H1 (cell line): ENCODE measurements at regions of chr9 and their contacts with region 1.

Region 1: GRCh38 chr9:105150991-105151685 is 93.3 kb upstream of the SLC44A1 start:
- DNase-seq: no peak
- H3K4me3 ChIP-seq: no peak overlapping the region
- H3K27ac ChIP-seq: no peak overlapping the region
- H3K4me1 ChIP-seq: no peaks in the 10 kb centered on the region
- H3K27me3 ChIP-seq: no peaks in the 10 kb centered on the region
- CTCF ChIP-seq: no peak
- EP300 ChIP-seq: no peak
- POLR2A ChIP-seq: no peak
- RAD21 ChIP-seq: no peak

Region 2: DNA sequence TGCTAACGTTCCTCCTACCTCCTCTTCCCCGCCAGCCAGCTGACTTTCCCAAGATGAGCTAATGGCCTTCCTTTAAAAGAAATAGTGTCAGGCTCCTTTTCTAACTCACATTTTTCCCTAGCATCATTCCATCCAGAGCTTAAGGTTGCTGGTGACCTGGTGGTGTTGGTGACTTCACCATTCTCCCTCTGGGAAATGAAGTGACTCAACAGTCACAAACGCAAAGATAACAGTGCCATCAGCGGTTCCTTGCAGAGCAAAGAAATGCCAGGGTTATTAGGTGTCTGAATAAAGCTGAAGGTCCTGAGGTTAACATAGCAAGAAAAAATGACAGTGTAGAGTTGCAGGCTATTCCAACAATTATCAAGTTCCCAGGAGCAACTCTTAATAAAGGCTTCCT is 18.6 kb before region 1 on chr9:
- CTCF ChIA-PET with region 1: interaction called, 14 read pairs
- POLR2A ChIA-PET with region 1: no interaction called
- DNase-seq: no peak
- H3K4me3 ChIP-seq: no peak overlapping the region
- H3K27ac ChIP-seq: no peak overlapping the region
- H3K4me1 ChIP-seq: peaks cover 0 to 3% (median 0%) of the 10 kb centered on the region in 4 experiments; a peak in 2 of 7 replicates
- H3K27me3 ChIP-seq: no peaks in the 10 kb centered on the region; a peak in 1 of 7 replicates
- CTCF ChIP-seq: no peak
- EP300 ChIP-seq: no peak
- POLR2A ChIP-seq: no peak
- RAD21 ChIP-seq: no peak

Region 3: DNA sequence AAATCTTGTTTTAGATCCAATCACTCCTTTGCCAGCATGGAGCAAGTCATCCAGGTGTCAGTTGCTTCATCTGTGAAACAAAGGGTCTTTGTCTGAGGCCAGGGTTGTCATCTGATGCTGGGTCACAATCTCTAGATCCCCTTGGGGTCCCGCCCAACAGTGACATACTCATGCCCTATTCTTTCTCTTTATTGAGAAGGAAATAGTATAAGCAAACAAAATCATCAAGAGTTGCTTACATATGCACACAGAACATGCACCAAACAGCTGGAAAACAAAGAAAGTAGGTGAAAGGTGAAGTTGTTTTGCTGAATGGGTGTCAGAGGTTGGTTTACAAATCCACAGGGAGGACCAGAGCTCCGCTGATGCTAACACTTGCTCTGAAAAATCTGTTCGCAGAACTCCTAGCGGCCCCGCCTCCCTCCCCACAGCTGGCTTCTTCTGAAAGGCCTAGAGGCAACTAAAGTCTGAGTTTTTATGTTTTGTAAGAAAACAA is 12.8 kb before region 1 on chr9:
- CTCF ChIA-PET with region 1: interaction called, 14 read pairs
- POLR2A ChIA-PET with region 1: interaction called, 5 read pairs
- DNase-seq: peak in 1 of 2 experiments; percentile 82
- H3K4me3 ChIP-seq: peak overlapping the region in 1 of 4 experiments; percentile 10; a peak in 1 of 8 replicates
- H3K27ac ChIP-seq: peak overlapping the region; percentile 51; the same call in 1 of the 2 replicates
- H3K4me1 ChIP-seq: peaks cover 7 to 18% (median 13%) of the 10 kb centered on the region in 4 experiments; a peak in 5 of 7 replicates
- H3K27me3 ChIP-seq: peaks cover 0 to 4% (median 0%) of the 10 kb centered on the region in 4 experiments; a peak in 1 of 7 replicates
- CTCF ChIP-seq: no peak
- EP300 ChIP-seq: peak in 1 of 2 experiments; percentile 70; a peak in 1 of 3 replicates
- POLR2A ChIP-seq: no peak
- RAD21 ChIP-seq: no peak

Region 4: GRCh38 chr9:105341434-105342144 is 190.5 kb after region 1 on chr9:
- CTCF ChIA-PET with region 1: no interaction called
- POLR2A ChIA-PET with region 1: no interaction called
- DNase-seq: no peak
- H3K4me3 ChIP-seq: no peak overlapping the region
- H3K27ac ChIP-seq: no peak overlapping the region
- H3K4me1 ChIP-seq: no peaks in the 10 kb centered on the region; a peak in 1 of 7 replicates
- H3K27me3 ChIP-seq: no peaks in the 10 kb centered on the region
- CTCF ChIP-seq: no peak
- EP300 ChIP-seq: no peak
- POLR2A ChIP-seq: no peak
- RAD21 ChIP-seq: no peak